ENCODE measurements at regions of chr1 and their contacts with region 1.

Region 1: GRCh38 chr1:109532365-109533136 is 7.1 kb upstream of the GPR61 start:
- DNase-seq: peak; percentile 86 to 87
- ATAC-seq: peak; percentile 70 to 88 (median 78)
- H3K4me3 ChIP-seq: peak overlapping the region in 7 of 10 donors; percentile 14 to 39 (median 30)
- H3K27ac ChIP-seq: peak overlapping the region in 9 of 10 donors; percentile 15 to 80 (median 63)
- H3K4me1 ChIP-seq: peaks cover 9 to 64% (median 36%) of the 10 kb centered on the region in 9 donors
- H3K27me3 ChIP-seq: no peaks in the 10 kb centered on the region
- CTCF ChIP-seq: peak; percentile 87 to 98 (median 93)

Region 2: GRCh38 chr1:109263597-109264398 is 268.8 kb before region 1 on chr1:
- intact Hi-C with region 1: loop called in 3 of 10 experiments (anchors 5 to 10 kb)
- DNase-seq: peak; percentile 73 to 85
- ATAC-seq: peak; percentile 80 to 90 (median 82)
- H3K4me3 ChIP-seq: no peak overlapping the region
- H3K27ac ChIP-seq: no peak overlapping the region
- H3K4me1 ChIP-seq: peaks cover 0 to 11% (median 0%) of the 10 kb centered on the region in 9 donors
- H3K27me3 ChIP-seq: no peaks in the 10 kb centered on the region
- CTCF ChIP-seq: peak; percentile 88 to 96 (median 93)

Region 3: GRCh38 chr1:109277434-109278204 is 254.9 kb before region 1 on chr1:
- intact Hi-C with region 1: loop called in 5 of 10 experiments (anchors 5 to 10 kb)
- DNase-seq: peak; percentile 78 to 81
- ATAC-seq: peak; percentile 65 to 84 (median 78)
- H3K4me3 ChIP-seq: no peak overlapping the region
- H3K27ac ChIP-seq: no peak overlapping the region
- H3K4me1 ChIP-seq: peaks cover 0 to 29% (median 7%) of the 10 kb centered on the region in 9 donors
- H3K27me3 ChIP-seq: no peaks in the 10 kb centered on the region
- CTCF ChIP-seq: peak; percentile 86 to 96 (median 89)

Region 4: GRCh38 chr1:109282952-109283747 is 249.4 kb before region 1 on chr1 and contains the start of gene PSRC1:
- intact Hi-C with region 1: loop called in 5 of 10 experiments (anchors 5 to 10 kb)
- DNase-seq: peak; percentile 95 to 96
- ATAC-seq: peak; percentile 99 to 100 (median 99)
- H3K4me3 ChIP-seq: peak within 1 kb of the TSS; percentile 46 to 83 (median 72)
- H3K27ac ChIP-seq: peak within 1 kb of the TSS; percentile 68 to 92 (median 84)
- H3K4me1 ChIP-seq: peaks cover 4 to 31% (median 10%) of the 10 kb centered on the region in 9 donors
- H3K27me3 ChIP-seq: peaks cover 0 to 2% (median 0%) of the 10 kb centered on the region in 7 donors
- CTCF ChIP-seq: peak in 7 of 9 donors; percentile 34 to 76 (median 51)
- total RNA-seq, gene PSRC1: 0.34 to 2.4 (median 0.59) TPM

Region 5: GRCh38 chr1:109426278-109427170 is 106.0 kb before region 1 on chr1 and contains the start of gene PSMA5:
- intact Hi-C with region 1: loop called in 4 of 10 experiments (anchors 5 kb)
- DNase-seq: peak; percentile 93 to 97
- ATAC-seq: peak; percentile 99 to 100 (median 99)
- H3K4me3 ChIP-seq: peak within 1 kb of the TSS; percentile 76 to 96 (median 90)
- H3K27ac ChIP-seq: peak within 1 kb of the TSS; percentile 47 to 94 (median 88)
- H3K4me1 ChIP-seq: peaks cover 0 to 47% (median 30%) of the 10 kb centered on the region in 9 donors
- H3K27me3 ChIP-seq: no peaks in the 10 kb centered on the region
- CTCF ChIP-seq: no peak
- total RNA-seq, gene PSMA5: 51.2 to 65.6 (median 59.2) TPM

Region 6: GRCh38 chr1:109493805-109494539 is 38.6 kb before region 1 on chr1 and contains the start of gene CYB561D1:
- intact Hi-C with region 1: loop called (anchors 1 to 2 kb)
- DNase-seq: peak; percentile 85 to 91
- ATAC-seq: peak; percentile 88 to 95 (median 93)
- H3K4me3 ChIP-seq: peak within 1 kb of the TSS; percentile 56 to 98 (median 86)
- H3K27ac ChIP-seq: peak within 1 kb of the TSS in 9 of 10 donors; percentile 46 to 92 (median 79)
- H3K4me1 ChIP-seq: peaks cover 0 to 42% (median 21%) of the 10 kb centered on the region in 9 donors
- H3K27me3 ChIP-seq: no peaks in the 10 kb centered on the region
- CTCF ChIP-seq: peak; percentile 92 to 100 (median 97)
- total RNA-seq, gene CYB561D1: 3.3 to 7.6 (median 4.5) TPM

Measured in heart right ventricle (tissue), 16 donors.